Kidney (tissue), 22 donors: ENCODE measurements at regions of chr2 and their contacts with region 1.

Region 1: DNA sequence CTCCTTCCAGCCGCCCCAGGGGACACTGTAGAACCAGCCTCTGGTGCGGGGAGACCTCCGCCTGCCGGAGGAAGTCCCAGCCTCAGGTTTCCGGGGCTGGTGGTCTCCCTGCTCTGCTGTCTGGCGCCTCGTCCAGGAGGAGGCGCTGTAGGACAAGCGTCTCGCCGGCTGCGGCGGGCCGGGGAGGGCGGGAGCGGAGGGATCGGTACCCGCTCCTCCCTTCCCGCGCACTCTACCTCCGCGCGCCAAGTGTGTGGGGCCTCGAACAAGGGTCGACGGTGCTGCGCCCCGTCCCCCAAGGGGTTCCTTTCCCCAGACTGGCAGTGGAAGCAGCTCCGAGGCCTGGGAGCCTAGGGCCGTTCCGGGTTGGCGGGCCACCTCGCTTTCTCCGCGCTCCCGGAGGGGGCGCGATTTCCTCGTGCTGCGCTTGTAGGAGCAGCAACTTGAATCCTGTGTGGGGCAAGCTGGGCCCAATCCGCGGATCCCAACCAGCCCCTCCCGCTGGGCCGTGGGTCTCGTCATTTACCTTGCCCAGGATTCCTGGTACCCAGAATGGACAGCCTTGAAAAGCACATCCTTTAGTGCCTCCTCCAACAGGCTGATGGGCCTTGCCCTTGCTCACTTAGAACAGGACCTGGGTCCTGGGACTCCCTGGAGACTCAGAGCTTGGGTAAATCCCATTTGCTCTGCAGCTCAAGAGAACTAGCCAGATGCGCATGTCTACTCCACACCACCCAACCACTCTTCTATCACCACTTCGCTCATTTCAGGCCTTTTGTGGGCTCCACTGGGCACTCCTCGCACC is 10.6 kb upstream of the HOXD4 start:
- DNase-seq: peak; percentile 94 to 97 (median 95)
- H3K4me3 ChIP-seq: peak overlapping the region; percentile 16 to 58 (median 57)
- H3K27ac ChIP-seq: peak overlapping the region; percentile 82 to 97
- H3K4me1 ChIP-seq: peaks cover 9 to 24% (median 19%) of the 10 kb centered on the region in 3 donors
- H3K27me3 ChIP-seq: no peaks in the 10 kb centered on the region
- CTCF ChIP-seq: peak; percentile 97

Region 2: DNA sequence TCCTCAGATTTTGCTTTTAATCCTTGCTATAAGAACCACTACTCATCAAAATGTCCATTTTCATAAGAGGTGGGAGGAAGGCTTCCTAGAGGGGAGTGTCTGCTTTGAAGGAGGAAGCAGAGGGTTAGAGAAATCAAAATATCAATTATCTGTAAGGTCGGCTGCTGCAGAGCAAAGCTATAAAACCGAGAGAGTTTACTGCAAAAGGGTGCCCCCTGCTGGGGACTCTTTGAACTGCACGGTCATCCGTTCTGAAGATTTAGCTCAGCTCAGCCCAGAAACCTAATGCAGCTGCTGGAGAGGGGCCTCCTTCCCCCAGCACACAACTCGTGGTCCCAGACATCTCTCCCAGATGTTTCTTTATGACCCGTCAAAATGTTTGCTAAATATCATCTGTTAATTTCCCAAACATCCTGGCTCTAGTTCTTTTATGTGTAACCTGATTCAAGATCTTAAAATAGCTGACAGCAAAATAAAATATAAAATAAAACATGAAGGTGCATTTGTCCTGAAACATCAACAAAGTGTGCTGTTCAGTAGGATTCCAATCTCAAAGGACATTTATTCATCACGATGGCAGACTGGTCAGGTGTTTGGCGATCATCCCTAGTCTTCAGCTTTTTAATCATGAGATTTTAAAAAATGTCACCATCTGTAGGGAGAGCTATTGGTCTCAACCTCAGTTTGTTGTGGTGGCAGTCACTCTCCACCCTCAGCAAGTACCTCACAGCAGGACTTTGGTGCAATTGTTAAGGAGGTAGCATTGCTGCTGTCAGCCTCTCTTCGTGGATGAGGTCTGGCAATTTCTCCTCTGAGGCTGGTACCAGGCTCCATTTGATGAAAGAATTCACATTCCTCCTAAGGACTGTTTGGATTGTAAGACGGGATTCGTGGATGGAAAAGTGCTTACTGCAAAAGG is 314.4 kb after region 1 on chr2:
- intact Hi-C with region 1: loop called (anchors 10 kb)
- DNase-seq: peak; percentile 87 to 95 (median 93)
- H3K4me3 ChIP-seq: no peak overlapping the region
- H3K27ac ChIP-seq: peak overlapping the region; percentile 27 to 63
- H3K4me1 ChIP-seq: peaks cover 0 to 7% (median 0%) of the 10 kb centered on the region in 3 donors
- H3K27me3 ChIP-seq: no peaks in the 10 kb centered on the region
- CTCF ChIP-seq: peak; percentile 96

Region 3: DNA sequence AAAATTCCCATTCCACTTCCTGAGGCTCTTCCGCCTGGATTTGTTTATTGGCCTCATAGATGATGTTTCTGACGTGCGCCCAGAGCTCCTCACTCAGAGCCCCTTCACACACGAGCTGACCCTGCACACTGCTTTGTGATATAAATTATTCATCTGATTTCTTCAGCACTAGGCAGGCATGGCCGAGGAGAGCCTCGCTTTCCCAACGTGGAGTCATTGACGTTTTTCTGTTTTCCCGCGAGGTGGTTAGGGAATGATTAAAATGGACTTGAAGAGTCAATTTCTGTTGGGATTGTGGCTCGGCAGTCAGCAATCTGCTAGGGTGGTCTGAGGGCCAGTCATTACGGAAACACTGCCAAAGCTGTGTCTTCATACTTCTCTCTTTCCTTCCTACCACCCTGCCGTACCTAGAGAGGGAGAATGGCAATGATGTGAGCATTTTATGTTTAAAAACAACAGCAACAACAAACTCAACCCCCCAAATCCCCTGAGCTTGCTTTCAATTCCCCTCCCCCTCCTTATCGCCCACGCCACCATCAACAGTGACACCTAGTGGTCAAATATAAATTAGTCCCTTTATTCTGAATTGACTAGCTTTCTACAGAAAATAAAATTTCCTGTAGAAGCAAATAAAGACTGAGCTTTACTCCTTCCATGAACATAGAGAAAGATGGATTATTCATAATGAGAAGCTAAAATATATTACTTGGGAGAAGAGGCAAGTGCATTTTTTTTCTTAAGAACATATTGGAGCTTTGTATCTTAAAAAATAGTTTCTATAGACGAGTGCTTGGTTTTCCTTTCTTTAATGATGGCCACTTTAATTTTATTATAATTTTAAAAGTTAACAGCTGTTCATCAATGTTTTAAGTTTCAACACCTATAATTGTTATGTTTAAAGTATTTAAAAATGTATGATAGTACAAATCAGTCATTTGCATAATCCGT is 413.7 kb after region 1 on chr2:
- intact Hi-C with region 1: loop called (anchors 10 kb)
- DNase-seq: peak in 4 of 5 donors; percentile 77 to 91 (median 86)
- H3K4me3 ChIP-seq: peak overlapping the region; percentile 76 to 85 (median 79)
- H3K27ac ChIP-seq: peak overlapping the region; percentile 77 to 88
- H3K4me1 ChIP-seq: peaks cover 0 to 9% (median 5%) of the 10 kb centered on the region in 3 donors
- H3K27me3 ChIP-seq: no peaks in the 10 kb centered on the region
- CTCF ChIP-seq: peak; percentile 81